ENCODE measurements at regions of chr3 and their contacts with region 1.

Region 1: GRCh38 chr3:42032693-42033349 is 58.3 kb upstream of the TRAK1 start:
- DNase-seq: peak; percentile 95
- ATAC-seq: peak; percentile 95
- H3K4me3 ChIP-seq: peak overlapping the region; percentile 26 to 53 (median 43)
- H3K27ac ChIP-seq: peak overlapping the region; percentile 85
- H3K4me1 ChIP-seq: peaks cover 58% of the 10 kb centered on the region
- H3K27me3 ChIP-seq: no peaks in the 10 kb centered on the region
- CTCF ChIP-seq: peak; percentile 46
- EP300 ChIP-seq: peak; percentile 76 to 88; a peak in 3 of 4 replicates
- POLR2A ChIP-seq: no peak
- RAD21 ChIP-seq: peak; percentile 46; the same call in 1 of the 2 replicates

Region 2: GRCh38 chr3:42067326-42067725 is 34.5 kb after region 1 on chr3:
- CTCF ChIA-PET with region 1: no interaction called
- POLR2A ChIA-PET with region 1: no interaction called
- in situ Hi-C with region 1: no loop called
- intact Hi-C with region 1: loop called (anchors 5 kb)
- DNase-seq: no peak
- ATAC-seq: no peak
- H3K4me3 ChIP-seq: no peak overlapping the region
- H3K27ac ChIP-seq: peak overlapping the region; percentile 56
- H3K4me1 ChIP-seq: peaks cover 70% of the 10 kb centered on the region
- H3K27me3 ChIP-seq: no peaks in the 10 kb centered on the region
- CTCF ChIP-seq: no peak
- EP300 ChIP-seq: no peak
- POLR2A ChIP-seq: no peak
- RAD21 ChIP-seq: no peak

Region 3: GRCh38 chr3:42290966-42291714 is 258.3 kb after region 1 on chr3:
- CTCF ChIA-PET with region 1: no interaction called
- POLR2A ChIA-PET with region 1: no interaction called
- in situ Hi-C with region 1: no loop called
- intact Hi-C with region 1: no loop called
- DNase-seq: no peak
- ATAC-seq: no peak
- H3K4me3 ChIP-seq: no peak overlapping the region
- H3K27ac ChIP-seq: no peak overlapping the region
- H3K4me1 ChIP-seq: peaks cover 16% of the 10 kb centered on the region
- H3K27me3 ChIP-seq: peaks cover 0 to 3% of the 10 kb centered on the region in 2 experiments; a peak in 1 of 5 replicates
- CTCF ChIP-seq: no peak
- EP300 ChIP-seq: no peak
- POLR2A ChIP-seq: no peak
- RAD21 ChIP-seq: no peak

Measured in HepG2 (cell line).